ENCODE measurements at regions of chr6 and their contacts with region 1.

Region 1: DNA sequence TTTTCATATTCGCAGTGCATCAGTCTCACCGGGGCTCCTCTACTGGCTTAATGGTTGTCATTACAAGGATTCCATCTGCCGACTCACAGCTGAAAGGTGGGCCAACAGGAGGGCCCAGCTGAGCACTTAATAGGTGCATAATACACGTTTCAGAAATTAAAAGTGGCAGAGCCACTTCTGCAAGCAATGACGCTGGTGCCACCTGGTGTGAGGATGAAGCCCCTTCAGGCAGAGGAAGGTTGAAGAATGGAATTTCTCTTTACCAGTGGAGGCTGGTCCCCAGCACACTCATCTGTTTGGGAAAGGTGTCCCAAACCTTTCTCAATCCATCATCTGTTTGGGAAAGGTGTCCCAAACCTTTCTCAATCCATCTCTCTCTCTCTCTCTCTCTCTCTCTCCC is 8.2 kb upstream of the STMND1 start:
- DNase-seq: peak in 1 of 2 experiments; percentile 23
- H3K4me3 ChIP-seq: no peak overlapping the region
- H3K27ac ChIP-seq: no peak overlapping the region
- H3K4me1 ChIP-seq: 0 out of 2 replicates have a peak, but pooled peaks cover 4% of the 10 kb centered on the region
- H3K27me3 ChIP-seq: no peaks in the 10 kb centered on the region
- CTCF ChIP-seq: peak; percentile 57

Region 2: DNA sequence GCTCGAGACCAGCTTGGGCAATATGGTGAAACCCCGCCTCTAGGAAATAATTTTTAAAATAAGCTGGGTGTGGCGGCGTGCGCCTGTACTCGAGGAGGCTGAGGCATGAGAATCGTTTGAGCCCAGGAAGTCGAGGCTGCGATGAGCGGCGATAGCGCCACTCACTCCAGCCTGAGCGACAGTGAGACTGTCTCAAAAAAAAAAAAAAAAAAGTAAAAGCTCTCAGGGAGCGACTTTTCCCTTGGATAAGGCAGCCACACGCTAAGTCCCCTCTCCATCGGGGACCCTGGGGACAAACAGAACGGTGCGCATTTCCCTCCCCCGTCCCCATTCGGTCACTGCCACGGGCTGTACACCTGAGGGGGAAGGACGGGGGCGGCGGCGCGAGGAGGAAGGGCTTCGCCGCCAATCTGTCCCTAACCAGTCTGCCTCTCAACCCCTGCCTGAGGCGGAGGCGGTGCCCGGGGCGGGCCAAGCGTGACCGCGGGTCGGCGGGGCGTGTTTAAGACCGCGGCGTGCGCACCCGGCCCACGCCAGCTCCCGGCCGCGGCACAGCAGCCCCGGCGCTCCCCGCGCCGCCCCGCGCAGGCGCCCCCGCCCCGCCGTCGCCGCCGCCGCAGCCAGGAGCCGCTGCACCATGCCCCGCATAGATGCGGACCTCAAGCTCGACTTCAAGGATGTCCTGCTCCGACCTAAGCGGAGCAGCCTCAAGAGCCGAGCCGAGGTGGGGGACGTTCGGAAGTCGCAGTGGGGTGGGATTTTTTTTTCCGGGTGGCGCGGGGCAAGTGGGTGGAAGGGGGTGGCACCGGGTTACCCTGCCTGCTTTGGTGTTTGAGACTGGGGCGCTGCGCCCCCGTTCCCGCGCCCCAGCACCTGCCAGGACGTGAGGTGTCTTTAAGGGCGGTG is 855.4 kb before region 1 on chr6 and contains the start of gene GMPR:
- CTCF ChIA-PET with region 1: no interaction called
- POLR2A ChIA-PET with region 1: no interaction called
- intact Hi-C with region 1: loop called (anchors 10 kb)
- DNase-seq: peak in 1 of 2 experiments; percentile 71
- H3K4me3 ChIP-seq: peak within 1 kb of the TSS; percentile 54
- H3K27ac ChIP-seq: no peak within 1 kb of the TSS
- H3K4me1 ChIP-seq: peaks cover 10% of the 10 kb centered on the region; the same call in 1 of the 2 replicates
- H3K27me3 ChIP-seq: peaks cover 64% of the 10 kb centered on the region
- CTCF ChIP-seq: no peak
- total RNA-seq, gene GMPR: 2.0 and 2.4 TPM in 2 replicates

Region 3: GRCh38 chr6:16361861-16362260 is 731.8 kb before region 1 on chr6:
- CTCF ChIA-PET with region 1: no interaction called
- POLR2A ChIA-PET with region 1: interaction called, 19 read pairs
- intact Hi-C with region 1: no loop called
- DNase-seq: no peak
- H3K4me3 ChIP-seq: no peak overlapping the region
- H3K27ac ChIP-seq: no peak overlapping the region
- H3K4me1 ChIP-seq: peaks cover 5% of the 10 kb centered on the region
- H3K27me3 ChIP-seq: no peaks in the 10 kb centered on the region
- CTCF ChIP-seq: no peak

Region 4: GRCh38 chr6:17057322-17057721 is 36.4 kb before region 1 on chr6:
- CTCF ChIA-PET with region 1: no interaction called
- POLR2A ChIA-PET with region 1: no interaction called
- intact Hi-C with region 1: no loop called
- DNase-seq: no peak
- H3K4me3 ChIP-seq: no peak overlapping the region
- H3K27ac ChIP-seq: no peak overlapping the region
- H3K4me1 ChIP-seq: 0 out of 2 replicates have a peak, but pooled peaks cover 5% of the 10 kb centered on the region
- H3K27me3 ChIP-seq: no peaks in the 10 kb centered on the region
- CTCF ChIP-seq: no peak